Activated naive CD4-positive, alpha-beta T cell treated with anti-CD3 and anti-CD28 coated beads, Interleukin-2, amount 10 ng/mL, durations not matched to agents 7 days and 5 days (primary cell): ENCODE measurements at regions of chr9 and their contacts with region 1.

Region 1: GRCh38 chr9:127770905-127771569 is 7.4 kb downstream of the SH2D3C start:
- DNase-seq: peak; percentile 99
- H3K4me3 Mint-ChIP-seq: peak overlapping the region; percentile 80
- H3K27ac Mint-ChIP-seq: peak overlapping the region; percentile 93
- H3K4me1 Mint-ChIP-seq: peaks cover 85% of the 10 kb centered on the region
- H3K27me3 Mint-ChIP-seq: no peaks in the 10 kb centered on the region

Region 2: GRCh38 chr9:127785023-127785932 is 14.2 kb after region 1 on chr9:
- CTCF ChIA-PET with region 1: interaction called, 17 read pairs
- DNase-seq: peak; percentile 91
- H3K4me3 Mint-ChIP-seq: peak overlapping the region; percentile 95
- H3K27ac Mint-ChIP-seq: peak overlapping the region; percentile 96
- H3K4me1 Mint-ChIP-seq: peaks cover 75% of the 10 kb centered on the region
- H3K27me3 Mint-ChIP-seq: no peaks in the 10 kb centered on the region